CD4-positive, alpha-beta T cell (primary cell): ENCODE measurements at regions of chr20 and their contacts with region 1.

Region 1: GRCh38 chr20:63520504-63520933 is at the start of gene PPDPF:
- DNase-seq: peak; percentile 75 to 95 (median 84)
- ATAC-seq: peak; percentile 80
- H3K4me3 ChIP-seq: peak within 1 kb of the TSS; percentile 65
- H3K4me3 Mint-ChIP-seq: peak within 1 kb of the TSS; percentile 88
- H3K27ac ChIP-seq: peak within 1 kb of the TSS in 1 of 2 donors; percentile 35
- H3K27ac Mint-ChIP-seq: peak within 1 kb of the TSS; percentile 69
- H3K4me1 ChIP-seq: peaks cover 29% of the 10 kb centered on the region
- H3K4me1 Mint-ChIP-seq: peaks cover 13% of the 10 kb centered on the region
- H3K27me3 ChIP-seq: no peaks in the 10 kb centered on the region
- H3K27me3 Mint-ChIP-seq: no peaks in the 10 kb centered on the region
- CTCF ChIP-seq: no peak
- total RNA-seq, gene PPDPF: 249 to 251 TPM

Region 2: DNA sequence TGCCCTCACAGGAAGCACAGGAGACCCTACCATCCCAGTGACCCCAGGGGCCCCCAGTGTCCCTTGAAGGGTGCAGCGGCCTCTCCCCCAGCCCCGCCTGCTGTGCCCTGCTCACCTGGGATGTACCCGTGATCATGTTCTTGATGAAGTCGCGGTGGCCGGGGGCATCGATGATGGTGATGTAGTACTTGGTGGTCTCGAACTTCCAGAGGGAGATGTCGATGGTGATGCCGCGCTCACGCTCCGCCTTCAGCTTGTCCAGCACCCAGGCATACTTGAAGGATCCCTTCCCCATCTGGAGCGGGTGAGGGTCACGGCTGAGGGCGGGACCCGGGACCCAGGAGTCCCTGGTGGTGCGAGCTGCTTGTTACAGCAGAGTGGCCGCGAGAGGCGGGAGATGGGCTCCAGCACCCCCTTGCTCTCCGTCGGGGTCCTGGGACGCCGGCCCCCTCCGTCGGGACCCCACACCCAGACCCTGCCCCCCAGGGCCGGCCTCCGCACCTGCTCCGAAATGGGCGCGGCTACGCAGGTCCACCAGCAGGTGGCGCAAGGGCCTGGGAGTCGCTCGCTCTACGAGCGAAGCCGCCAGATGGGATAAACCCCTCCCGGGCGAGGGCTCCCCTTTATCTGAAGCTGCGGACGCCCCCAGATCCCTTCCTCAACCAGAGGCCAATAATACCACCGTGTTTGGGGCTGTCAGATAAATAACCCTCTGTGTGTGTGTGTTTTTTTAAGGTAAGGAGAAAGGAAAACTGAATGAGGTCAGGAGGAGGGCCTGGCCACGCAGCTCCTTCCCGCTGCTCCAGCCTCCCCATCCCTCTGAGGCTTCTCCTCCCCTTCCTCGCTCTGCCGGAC is 24.6 kb before region 1 on chr20:
- CTCF ChIA-PET with region 1: interaction called, 9 read pairs
- POLR2A ChIA-PET with region 1: interaction called, 16 read pairs
- intact Hi-C with region 1: loop called (anchors 1 kb)
- DNase-seq: peak; percentile 64 to 88 (median 75)
- ATAC-seq: peak; percentile 68
- H3K4me3 ChIP-seq: peak overlapping the region; percentile 18
- H3K4me3 Mint-ChIP-seq: peak overlapping the region; percentile 45
- H3K27ac ChIP-seq: no peak overlapping the region
- H3K27ac Mint-ChIP-seq: no peak overlapping the region
- H3K4me1 ChIP-seq: peaks cover 33% of the 10 kb centered on the region
- H3K4me1 Mint-ChIP-seq: peaks cover 5% of the 10 kb centered on the region
- H3K27me3 ChIP-seq: peaks cover 30 to 35% of the 10 kb centered on the region in 2 experiments
- H3K27me3 Mint-ChIP-seq: peaks cover 28% of the 10 kb centered on the region
- CTCF ChIP-seq: peak; percentile 93

Region 3: DNA sequence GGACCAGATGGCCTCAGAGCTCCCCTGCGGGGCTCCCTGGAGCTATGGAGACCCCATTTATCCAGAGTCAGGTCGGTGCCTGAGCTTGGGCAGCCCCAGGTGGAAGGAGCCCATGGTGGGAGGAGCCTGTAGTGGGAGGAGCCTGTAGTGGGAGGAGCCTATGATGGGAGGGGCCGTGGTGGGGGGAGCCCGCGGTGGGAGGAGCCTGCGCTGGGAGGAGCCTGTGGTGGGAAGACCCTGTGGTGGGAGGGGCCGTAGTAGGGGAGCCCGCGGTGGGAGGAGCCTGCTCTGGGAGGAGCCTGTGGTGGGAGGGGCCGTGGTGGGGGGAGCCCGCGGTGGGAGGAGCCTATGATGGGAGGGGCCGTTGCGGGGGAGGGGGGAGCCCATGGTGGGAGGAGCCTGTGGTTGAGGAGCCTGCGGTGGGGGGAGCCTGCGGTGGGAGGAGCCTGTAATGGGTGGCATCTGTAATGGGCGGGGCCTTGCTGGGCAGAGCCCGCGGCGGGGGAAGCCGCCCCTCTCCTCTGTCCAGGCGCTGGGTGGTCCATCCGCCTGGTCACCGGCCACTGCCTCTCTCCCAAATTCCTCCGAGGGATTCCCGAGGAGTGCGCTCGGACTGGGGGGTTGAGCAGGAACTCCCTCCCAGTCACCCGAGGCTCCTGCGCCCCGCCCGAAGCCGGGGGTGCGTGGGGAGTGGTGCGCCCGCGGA is 32.9 kb after region 1 on chr20:
- CTCF ChIA-PET with region 1: no interaction called
- POLR2A ChIA-PET with region 1: interaction called, 9 read pairs
- intact Hi-C with region 1: loop called in 1 of 2 experiments (anchors 1 kb)
- DNase-seq: peak; percentile 74 to 96 (median 90)
- ATAC-seq: peak; percentile 83
- H3K4me3 ChIP-seq: peak overlapping the region; percentile 68
- H3K4me3 Mint-ChIP-seq: peak overlapping the region; percentile 90
- H3K27ac ChIP-seq: peak overlapping the region; percentile 73 to 82
- H3K27ac Mint-ChIP-seq: peak overlapping the region; percentile 91
- H3K4me1 ChIP-seq: peaks cover 39% of the 10 kb centered on the region
- H3K4me1 Mint-ChIP-seq: peaks cover 18% of the 10 kb centered on the region
- H3K27me3 ChIP-seq: peaks cover 3 to 4% of the 10 kb centered on the region in 2 experiments
- H3K27me3 Mint-ChIP-seq: no peaks in the 10 kb centered on the region
- CTCF ChIP-seq: no peak